ENCODE measurements at regions of chr7 and their contacts with region 1.

Region 1: DNA sequence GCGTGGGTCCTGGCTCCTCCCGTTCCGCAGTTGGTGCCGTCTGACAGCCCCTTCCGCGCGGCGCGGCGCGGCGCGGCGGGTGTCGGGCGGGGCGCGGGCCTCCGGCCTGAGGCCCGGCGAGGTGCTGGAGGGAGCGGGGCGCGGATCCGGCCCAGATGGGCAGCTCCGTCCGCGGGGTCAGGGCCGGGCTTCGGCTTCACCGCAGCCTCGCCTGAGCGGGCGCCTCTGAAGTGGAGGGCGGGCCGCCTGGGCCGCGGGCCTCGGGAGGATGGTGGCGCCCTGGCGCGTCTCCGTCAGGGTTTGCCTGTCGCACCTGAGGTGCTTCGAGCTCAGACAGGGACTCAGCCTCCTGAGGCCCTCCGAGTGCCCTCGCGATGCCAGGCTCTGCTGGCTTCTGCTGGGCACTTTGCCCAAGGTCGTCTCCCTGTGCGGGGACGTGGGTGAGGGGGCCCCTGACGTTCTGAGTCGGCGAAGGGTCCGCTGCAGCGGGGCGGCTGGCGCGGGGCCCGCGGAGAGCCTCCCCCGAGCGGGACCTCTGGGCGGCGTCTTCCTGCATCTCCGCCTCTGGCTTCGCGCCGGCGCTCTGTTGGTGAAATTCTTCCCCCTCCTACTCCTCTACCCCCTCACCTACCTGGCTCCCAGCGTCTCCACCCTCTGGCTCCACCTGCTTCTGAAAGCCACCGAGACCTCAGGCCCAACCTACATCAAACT is 473 bp downstream of the ADCK2 start:
- DNase-seq: peak; percentile 30 to 79 (median 65)
- ATAC-seq: peak; percentile 77
- H3K4me3 ChIP-seq: peak overlapping the region; percentile 56 to 64
- H3K4me3 Mint-ChIP-seq: peak overlapping the region; percentile 88
- H3K27ac ChIP-seq: peak overlapping the region; percentile 68 to 80
- H3K27ac Mint-ChIP-seq: peak overlapping the region; percentile 93
- H3K4me1 ChIP-seq: peaks cover 22% of the 10 kb centered on the region
- H3K4me1 Mint-ChIP-seq: peaks cover 41% of the 10 kb centered on the region
- H3K27me3 ChIP-seq: no peaks in the 10 kb centered on the region
- H3K27me3 Mint-ChIP-seq: no peaks in the 10 kb centered on the region
- CTCF ChIP-seq: no peak

Region 2: GRCh38 chr7:139340037-139340807 is 1333.0 kb before region 1 on chr7:
- CTCF ChIA-PET with region 1: no interaction called
- POLR2A ChIA-PET with region 1: no interaction called
- intact Hi-C with region 1: loop called (anchors 2 to 5 kb)
- DNase-seq: peak; percentile 95 to 100 (median 97)
- ATAC-seq: peak; percentile 80
- H3K4me3 ChIP-seq: peak overlapping the region; percentile 69 to 85
- H3K4me3 Mint-ChIP-seq: peak overlapping the region; percentile 98
- H3K27ac ChIP-seq: peak overlapping the region; percentile 94 to 98
- H3K27ac Mint-ChIP-seq: peak overlapping the region; percentile 100
- H3K4me1 ChIP-seq: peaks cover 13% of the 10 kb centered on the region
- H3K4me1 Mint-ChIP-seq: peaks cover 32% of the 10 kb centered on the region
- H3K27me3 ChIP-seq: no peaks in the 10 kb centered on the region
- H3K27me3 Mint-ChIP-seq: peaks cover 2% of the 10 kb centered on the region
- CTCF ChIP-seq: peak; percentile 36

Region 3: GRCh38 chr7:140342727-140343514 is 330.3 kb before region 1 on chr7:
- CTCF ChIA-PET with region 1: no interaction called
- POLR2A ChIA-PET with region 1: no interaction called
- intact Hi-C with region 1: no loop called
- DNase-seq: peak in 2 of 9 experiments; percentile 22 to 36
- ATAC-seq: no peak
- H3K4me3 ChIP-seq: no peak overlapping the region
- H3K4me3 Mint-ChIP-seq: no peak overlapping the region
- H3K27ac ChIP-seq: no peak overlapping the region
- H3K27ac Mint-ChIP-seq: no peak overlapping the region
- H3K4me1 ChIP-seq: no peaks in the 10 kb centered on the region
- H3K4me1 Mint-ChIP-seq: no peaks in the 10 kb centered on the region
- H3K27me3 ChIP-seq: no peaks in the 10 kb centered on the region
- H3K27me3 Mint-ChIP-seq: no peaks in the 10 kb centered on the region
- CTCF ChIP-seq: no peak

Region 4: GRCh38 chr7:140726281-140726680 is 53.1 kb after region 1 on chr7:
- CTCF ChIA-PET with region 1: interaction called, 3 read pairs
- POLR2A ChIA-PET with region 1: interaction called, 15 read pairs
- intact Hi-C with region 1: loop called in 1 of 2 experiments (anchors 10 kb)
- DNase-seq: peak in 2 of 9 experiments; percentile 11 to 38
- ATAC-seq: no peak
- H3K4me3 ChIP-seq: no peak overlapping the region
- H3K4me3 Mint-ChIP-seq: no peak overlapping the region
- H3K27ac ChIP-seq: no peak overlapping the region
- H3K27ac Mint-ChIP-seq: no peak overlapping the region
- H3K4me1 ChIP-seq: peaks cover 13% of the 10 kb centered on the region
- H3K4me1 Mint-ChIP-seq: peaks cover 26% of the 10 kb centered on the region
- H3K27me3 ChIP-seq: no peaks in the 10 kb centered on the region
- H3K27me3 Mint-ChIP-seq: no peaks in the 10 kb centered on the region
- CTCF ChIP-seq: peak; percentile 25